PC-3 (cell line): ENCODE measurements at regions of chr20 and their contacts with region 1.

Region 1: GRCh38 chr20:47392015-47392720 is 35.7 kb upstream of the ZMYND8 start:
- DNase-seq: peak; percentile 99
- ATAC-seq: peak; percentile 82
- H3K4me3 ChIP-seq: peak overlapping the region; percentile 57
- H3K27ac ChIP-seq: peak overlapping the region; percentile 97
- H3K4me1 ChIP-seq: peaks cover 37% of the 10 kb centered on the region
- H3K27me3 ChIP-seq: no peaks in the 10 kb centered on the region
- CTCF ChIP-seq: no peak

Region 2: DNA sequence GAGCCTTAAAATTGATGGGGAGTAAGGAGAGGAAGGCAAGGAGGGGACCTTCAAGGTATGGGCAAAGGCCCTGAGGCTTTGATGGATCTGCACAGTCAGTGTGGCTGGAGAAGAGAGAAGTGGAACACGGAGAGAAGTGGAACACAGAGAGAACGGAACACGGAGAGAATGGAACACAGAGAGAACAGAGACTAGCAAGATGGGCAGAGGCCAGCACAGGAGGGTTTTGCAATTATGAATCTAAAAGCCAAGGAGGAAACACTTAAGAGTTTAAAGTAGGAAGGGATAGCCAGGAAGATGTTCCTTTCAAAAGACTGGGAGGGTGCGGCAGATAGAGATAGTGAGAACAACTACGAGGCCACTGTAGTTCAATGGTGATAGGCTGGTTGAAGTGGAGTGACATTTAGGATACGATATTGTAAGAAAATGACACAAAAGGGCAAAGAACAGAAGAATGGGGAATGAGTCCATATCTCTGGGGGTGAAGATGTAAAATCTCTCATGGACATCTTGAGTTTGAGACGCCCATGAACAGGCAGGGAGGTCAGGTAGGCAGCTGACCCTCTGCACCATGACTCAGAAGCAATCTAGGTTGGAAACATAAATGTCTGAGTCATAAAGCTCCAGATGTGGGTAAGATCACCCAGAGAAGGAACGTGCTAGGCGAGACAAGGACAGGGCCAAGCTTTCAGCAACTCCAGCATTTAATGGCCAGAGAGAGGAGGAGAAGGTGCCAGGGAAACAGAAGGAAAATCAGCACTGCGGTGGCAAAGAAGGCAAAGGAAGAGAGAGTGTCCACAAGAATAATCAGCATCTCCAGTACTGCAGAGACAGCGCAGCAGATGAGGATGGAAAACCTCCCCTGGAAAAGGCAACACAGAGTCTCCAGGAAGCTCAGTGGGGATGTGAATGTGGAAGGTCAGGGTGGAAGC is 61.0 kb before region 1 on chr20:
- CTCF ChIA-PET with region 1: no interaction called
- POLR2A ChIA-PET with region 1: no interaction called
- intact Hi-C with region 1: no loop called
- DNase-seq: peak; percentile 85
- ATAC-seq: peak; percentile 54
- H3K4me3 ChIP-seq: no peak overlapping the region
- H3K27ac ChIP-seq: peak overlapping the region; percentile 56
- H3K4me1 ChIP-seq: peaks cover 65% of the 10 kb centered on the region
- H3K27me3 ChIP-seq: no peaks in the 10 kb centered on the region
- CTCF ChIP-seq: no peak

Region 3: DNA sequence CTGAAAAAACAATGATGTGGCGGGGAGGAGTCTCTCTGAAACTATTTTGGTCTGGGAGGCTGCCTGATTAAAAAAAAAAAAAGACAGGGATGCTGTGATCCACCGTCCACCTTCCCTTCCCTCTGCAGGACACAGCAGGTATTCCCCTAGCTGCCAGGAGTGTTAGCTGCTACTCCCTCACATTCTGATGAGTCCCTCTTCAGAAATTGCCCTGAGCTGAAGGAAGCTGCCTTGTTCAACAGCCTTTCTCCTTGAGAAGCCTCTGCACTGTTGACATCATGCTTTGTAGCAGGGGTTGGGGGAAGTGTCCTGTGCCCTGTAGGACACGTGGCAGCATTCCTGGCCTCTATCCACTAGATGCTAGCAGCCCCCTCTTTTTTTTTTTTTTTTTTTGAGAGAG is 36.0 kb after region 1 on chr20:
- CTCF ChIA-PET with region 1: no interaction called
- POLR2A ChIA-PET with region 1: no interaction called
- intact Hi-C with region 1: no loop called
- DNase-seq: no peak
- ATAC-seq: no peak
- H3K4me3 ChIP-seq: no peak overlapping the region
- H3K27ac ChIP-seq: no peak overlapping the region
- H3K4me1 ChIP-seq: peaks cover 13% of the 10 kb centered on the region
- H3K27me3 ChIP-seq: no peaks in the 10 kb centered on the region
- CTCF ChIP-seq: no peak

Region 4: DNA sequence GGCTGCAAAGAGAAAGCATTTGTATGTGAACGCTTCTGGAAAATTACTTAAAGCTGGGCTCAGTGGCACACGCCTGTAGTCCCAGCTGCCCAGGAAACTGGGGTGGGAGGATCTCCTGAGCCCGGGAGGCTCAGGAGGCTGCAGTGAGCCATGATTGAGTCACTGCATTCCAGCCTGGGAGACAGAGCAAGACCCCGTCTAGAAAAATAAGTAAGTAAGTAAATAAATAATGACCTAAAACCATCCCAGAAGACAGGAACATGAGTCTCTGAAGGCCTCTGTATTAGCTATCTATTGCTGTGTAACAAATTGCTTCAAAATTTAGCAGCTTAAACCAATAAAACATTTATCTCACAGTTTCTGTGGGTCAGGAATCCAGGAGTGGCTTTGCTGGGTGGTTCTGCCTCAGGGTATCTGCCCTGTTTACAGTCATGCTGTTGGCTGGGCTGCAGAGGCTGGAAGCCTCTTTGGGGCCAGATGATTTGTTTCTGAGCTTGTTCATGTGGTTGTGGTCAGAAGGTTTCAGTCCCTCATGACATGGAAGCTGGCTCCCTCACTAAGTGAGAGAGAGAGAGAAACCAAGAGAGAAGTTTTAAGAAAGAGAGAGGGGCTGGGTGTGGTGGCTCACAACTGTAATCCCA is 61.1 kb after region 1 on chr20:
- CTCF ChIA-PET with region 1: no interaction called
- POLR2A ChIA-PET with region 1: interaction called, 3 read pairs
- intact Hi-C with region 1: loop called (anchors 1 kb)
- DNase-seq: peak; percentile 96
- ATAC-seq: peak; percentile 99
- H3K4me3 ChIP-seq: peak overlapping the region; percentile 45
- H3K27ac ChIP-seq: peak overlapping the region; percentile 90
- H3K4me1 ChIP-seq: peaks cover 43% of the 10 kb centered on the region
- H3K27me3 ChIP-seq: no peaks in the 10 kb centered on the region
- CTCF ChIP-seq: no peak

Region 5: DNA sequence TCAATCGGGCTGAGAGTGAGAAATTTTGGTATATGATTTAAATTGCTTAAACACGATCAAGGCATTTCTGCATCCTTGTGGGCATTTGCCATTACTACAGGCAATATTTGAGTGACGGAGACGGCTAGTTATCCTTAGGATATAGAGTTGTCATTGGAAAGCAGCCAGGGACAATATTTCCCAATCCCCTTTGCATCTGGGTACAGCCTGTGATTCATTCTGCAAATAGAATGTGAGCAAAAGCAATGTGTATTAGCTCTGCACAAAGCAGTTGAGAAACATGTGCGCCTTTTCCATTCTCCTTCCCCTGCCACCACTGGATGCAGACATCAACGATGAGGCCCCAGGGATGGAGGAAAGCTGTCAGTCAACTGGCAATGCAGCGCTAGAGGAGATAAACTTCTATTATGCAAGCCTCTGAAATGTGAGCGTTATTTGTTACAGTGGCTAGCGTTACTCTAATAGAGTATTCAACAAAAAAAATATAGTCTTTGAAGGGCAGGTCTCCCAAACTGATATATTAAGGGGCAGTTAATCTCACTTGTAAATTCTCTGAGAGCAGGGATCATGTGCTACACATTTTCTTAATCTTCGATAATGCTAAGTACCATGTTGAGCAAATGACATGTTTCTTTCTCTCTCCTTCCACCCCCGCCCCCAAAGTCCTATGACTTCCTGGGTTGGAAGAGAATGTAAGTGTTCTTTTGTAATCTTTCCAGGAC is 72.4 kb after region 1 on chr20:
- CTCF ChIA-PET with region 1: interaction called, 3 read pairs
- POLR2A ChIA-PET with region 1: no interaction called
- intact Hi-C with region 1: loop called (anchors 1 kb)
- DNase-seq: peak; percentile 100
- ATAC-seq: peak; percentile 98
- H3K4me3 ChIP-seq: no peak overlapping the region; the same call in 1 of the 2 replicates
- H3K27ac ChIP-seq: peak overlapping the region; percentile 78
- H3K4me1 ChIP-seq: peaks cover 22% of the 10 kb centered on the region
- H3K27me3 ChIP-seq: no peaks in the 10 kb centered on the region
- CTCF ChIP-seq: peak; percentile 71